ENCODE measurements at regions of chr22 and their contacts with region 1.

Region 1: DNA sequence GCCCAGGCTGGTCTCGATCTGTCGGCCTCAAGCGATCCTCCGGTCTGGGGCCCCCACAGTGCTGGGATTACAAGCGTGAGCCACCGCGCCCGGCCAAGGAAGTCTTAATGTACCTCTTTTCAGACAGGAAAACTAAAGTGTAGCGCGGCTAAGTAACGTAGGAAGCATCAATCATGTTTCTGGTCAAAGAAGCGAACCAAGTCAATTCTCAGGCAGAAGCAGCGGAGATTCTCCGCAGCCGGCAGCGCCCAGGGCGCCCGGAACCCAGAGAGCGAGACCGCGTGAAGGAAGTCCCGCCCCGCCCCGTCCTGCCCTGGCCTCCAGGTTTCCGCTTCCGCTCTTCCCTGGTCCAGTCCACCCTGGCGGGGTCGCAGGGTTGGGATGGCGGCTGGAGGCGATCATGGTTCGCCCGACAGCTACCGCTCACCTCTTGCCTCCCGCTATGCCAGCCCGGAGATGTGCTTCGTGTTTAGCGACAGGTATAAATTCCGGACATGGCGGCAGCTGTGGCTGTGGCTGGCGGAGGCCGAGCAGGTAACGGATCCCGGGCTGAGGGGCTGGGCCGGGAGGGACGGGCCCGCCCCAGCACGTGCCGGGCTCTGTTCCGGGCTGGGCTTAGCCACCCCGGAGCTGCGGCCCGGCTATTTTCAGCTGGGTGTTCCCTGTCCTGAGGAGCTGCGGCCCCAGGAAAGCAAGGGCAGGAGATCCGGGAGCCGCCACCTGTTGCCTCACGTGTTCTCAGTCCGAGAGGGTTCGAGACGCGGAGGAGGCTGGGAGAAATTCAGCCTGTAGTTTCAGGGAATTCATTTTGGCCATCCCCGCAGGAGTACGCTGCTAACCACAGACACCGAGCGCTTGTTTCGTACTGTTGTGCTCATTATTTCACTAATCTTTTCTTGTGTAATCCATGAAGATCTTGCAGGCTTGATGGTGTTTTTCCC is at the start of gene ADSL:
- DNase-seq: peak; percentile 61 to 88 (median 76)
- ATAC-seq: peak; percentile 85 to 89 (median 87)
- H3K4me3 ChIP-seq: peak within 1 kb of the TSS; percentile 81 to 96
- H3K4me3 Mint-ChIP-seq: peak within 1 kb of the TSS; percentile 92 to 98 (median 97)
- H3K27ac ChIP-seq: peak within 1 kb of the TSS; percentile 85
- H3K27ac Mint-ChIP-seq: peak within 1 kb of the TSS; percentile 98 to 99
- H3K4me1 ChIP-seq: peaks cover 32 to 60% of the 10 kb centered on the region in 2 experiments
- H3K4me1 Mint-ChIP-seq: peaks cover 53 to 63% (median 58%) of the 10 kb centered on the region in 3 donors
- H3K27me3 ChIP-seq: no peaks in the 10 kb centered on the region
- H3K27me3 Mint-ChIP-seq: no peaks in the 10 kb centered on the region
- total RNA-seq, gene ADSL: 64.0 to 84.3 (median 75.1) TPM

Region 2: GRCh38 chr22:39980596-39980995 is 365.9 kb before region 1 on chr22:
- CTCF ChIA-PET with region 1: no interaction called
- POLR2A ChIA-PET with region 1: no interaction called
- DNase-seq: no peak
- ATAC-seq: peak in 2 of 4 experiments; percentile 8 to 11
- H3K4me3 ChIP-seq: no peak overlapping the region
- H3K4me3 Mint-ChIP-seq: peak overlapping the region in 1 of 3 donors; percentile 48
- H3K27ac ChIP-seq: no peak overlapping the region
- H3K27ac Mint-ChIP-seq: peak overlapping the region; percentile 55 to 81
- H3K4me1 ChIP-seq: peaks cover 18 to 19% of the 10 kb centered on the region in 2 experiments
- H3K4me1 Mint-ChIP-seq: peaks cover 34 to 39% (median 36%) of the 10 kb centered on the region in 3 donors
- H3K27me3 ChIP-seq: no peaks in the 10 kb centered on the region
- H3K27me3 Mint-ChIP-seq: no peaks in the 10 kb centered on the region

Region 3: GRCh38 chr22:40070701-40071100 is 275.7 kb before region 1 on chr22:
- CTCF ChIA-PET with region 1: interaction called in 1 of 2 experiments, 4 read pairs
- POLR2A ChIA-PET with region 1: interaction called, 4 to 10 read pairs
- DNase-seq: no peak
- ATAC-seq: no peak
- H3K4me3 ChIP-seq: no peak overlapping the region
- H3K4me3 Mint-ChIP-seq: no peak overlapping the region
- H3K27ac ChIP-seq: no peak overlapping the region
- H3K27ac Mint-ChIP-seq: no peak overlapping the region
- H3K4me1 ChIP-seq: peaks cover 15 to 24% of the 10 kb centered on the region in 2 experiments
- H3K4me1 Mint-ChIP-seq: peaks cover 76 to 83% (median 77%) of the 10 kb centered on the region in 3 donors
- H3K27me3 ChIP-seq: no peaks in the 10 kb centered on the region
- H3K27me3 Mint-ChIP-seq: no peaks in the 10 kb centered on the region

Region 4: GRCh38 chr22:40177738-40178416 is 168.6 kb before region 1 on chr22 and contains the start of gene TNRC6B:
- CTCF ChIA-PET with region 1: interaction called in 1 of 2 experiments, 12 read pairs
- POLR2A ChIA-PET with region 1: no interaction called
- DNase-seq: peak; percentile 31 to 94 (median 73)
- ATAC-seq: peak; percentile 84 to 92 (median 90)
- H3K4me3 ChIP-seq: peak within 1 kb of the TSS; percentile 59 to 82
- H3K4me3 Mint-ChIP-seq: peak within 1 kb of the TSS; percentile 76 to 92 (median 86)
- H3K27ac ChIP-seq: peak within 1 kb of the TSS; percentile 57
- H3K27ac Mint-ChIP-seq: peak within 1 kb of the TSS; percentile 91
- H3K4me1 ChIP-seq: peaks cover 41 to 42% of the 10 kb centered on the region in 2 experiments
- H3K4me1 Mint-ChIP-seq: peaks cover 60 to 67% (median 67%) of the 10 kb centered on the region in 3 donors
- H3K27me3 ChIP-seq: no peaks in the 10 kb centered on the region
- H3K27me3 Mint-ChIP-seq: no peaks in the 10 kb centered on the region
- total RNA-seq, gene TNRC6B: 122 to 173 (median 143) TPM

Region 5: GRCh38 chr22:40326905-40327735 is 19.3 kb before region 1 on chr22:
- CTCF ChIA-PET with region 1: interaction called, 5 to 24 read pairs
- POLR2A ChIA-PET with region 1: interaction called in 1 of 2 experiments, 4 read pairs
- DNase-seq: peak in 10 of 35 experiments; percentile 7 to 60 (median 26)
- ATAC-seq: peak in 1 of 4 experiments; percentile 4
- H3K4me3 ChIP-seq: no peak overlapping the region
- H3K4me3 Mint-ChIP-seq: peak overlapping the region in 2 of 3 donors; percentile 9 to 62
- H3K27ac ChIP-seq: peak overlapping the region; percentile 87
- H3K27ac Mint-ChIP-seq: peak overlapping the region; percentile 90 to 93
- H3K4me1 ChIP-seq: peaks cover 62 to 81% of the 10 kb centered on the region in 2 experiments
- H3K4me1 Mint-ChIP-seq: peaks cover 95 to 99% (median 97%) of the 10 kb centered on the region in 3 donors
- H3K27me3 ChIP-seq: no peaks in the 10 kb centered on the region
- H3K27me3 Mint-ChIP-seq: no peaks in the 10 kb centered on the region

Region 6: GRCh38 chr22:40418366-40419201 is 72.1 kb after region 1 on chr22:
- CTCF ChIA-PET with region 1: no interaction called
- POLR2A ChIA-PET with region 1: no interaction called
- DNase-seq: peak in 25 of 35 experiments; percentile 6 to 60 (median 29)
- ATAC-seq: peak in 1 of 4 experiments; percentile 81
- H3K4me3 ChIP-seq: no peak overlapping the region
- H3K4me3 Mint-ChIP-seq: no peak overlapping the region
- H3K27ac ChIP-seq: no peak overlapping the region
- H3K27ac Mint-ChIP-seq: peak overlapping the region in 1 of 2 donors; percentile 58
- H3K4me1 ChIP-seq: peaks cover 2 to 53% of the 10 kb centered on the region in 2 experiments
- H3K4me1 Mint-ChIP-seq: peaks cover 24 to 48% (median 35%) of the 10 kb centered on the region in 3 donors
- H3K27me3 ChIP-seq: no peaks in the 10 kb centered on the region
- H3K27me3 Mint-ChIP-seq: no peaks in the 10 kb centered on the region

Region 7: DNA sequence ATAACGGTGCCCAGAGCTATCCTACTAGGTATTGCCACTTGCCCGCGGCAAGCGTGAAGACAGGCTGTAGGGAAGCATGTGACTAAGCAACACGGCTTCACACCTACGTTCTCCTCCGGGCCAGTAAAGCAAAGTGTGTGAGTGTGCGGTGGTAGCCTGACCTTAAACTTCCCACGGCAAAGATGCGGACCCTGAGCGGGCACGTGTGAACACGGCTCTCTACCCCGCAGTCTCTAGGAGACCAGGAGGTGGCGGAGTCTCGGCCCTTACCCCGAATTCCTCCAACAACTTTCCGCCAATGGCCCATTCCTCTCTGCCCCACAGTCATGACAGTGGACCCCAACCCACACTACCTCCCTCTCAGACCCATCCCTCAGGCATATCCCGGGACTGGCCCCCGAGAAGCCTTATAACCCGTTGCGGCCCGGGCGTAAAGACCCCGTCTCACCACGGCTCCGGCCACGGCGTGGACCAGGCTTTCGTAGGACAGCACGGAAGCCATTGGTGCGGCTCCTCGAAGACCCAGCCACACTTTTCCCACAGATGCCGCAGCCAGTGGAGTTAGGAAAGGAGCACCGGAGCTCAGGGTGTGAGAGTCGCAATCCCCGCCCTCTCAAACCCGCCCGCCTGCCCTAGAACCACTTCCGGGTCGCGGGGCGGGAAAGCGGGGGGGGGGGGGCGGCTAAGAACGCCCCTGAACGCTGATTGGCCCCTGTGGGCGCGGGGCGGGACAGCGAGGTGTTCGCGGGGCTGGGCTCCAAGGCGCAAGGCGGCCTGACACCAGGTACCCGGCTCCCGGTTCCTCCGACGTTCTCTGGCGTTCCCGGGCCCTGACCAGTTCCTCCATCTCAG is 472.5 kb after region 1 on chr22 and contains the start of gene SLC25A17:
- CTCF ChIA-PET with region 1: no interaction called
- POLR2A ChIA-PET with region 1: no interaction called
- DNase-seq: peak; percentile 73 to 92 (median 85)
- ATAC-seq: peak; percentile 92 to 97 (median 94)
- H3K4me3 ChIP-seq: peak within 1 kb of the TSS; percentile 79 to 84
- H3K4me3 Mint-ChIP-seq: peak within 1 kb of the TSS; percentile 70 to 97 (median 94)
- H3K27ac ChIP-seq: peak within 1 kb of the TSS; percentile 32
- H3K27ac Mint-ChIP-seq: peak within 1 kb of the TSS; percentile 80 to 90
- H3K4me1 ChIP-seq: peaks cover 11 to 23% of the 10 kb centered on the region in 2 experiments
- H3K4me1 Mint-ChIP-seq: peaks cover 33 to 39% (median 39%) of the 10 kb centered on the region in 3 donors
- H3K27me3 ChIP-seq: no peaks in the 10 kb centered on the region
- H3K27me3 Mint-ChIP-seq: no peaks in the 10 kb centered on the region
- total RNA-seq, gene SLC25A17: 8.9 to 14.2 (median 12.7) TPM